PC-9 (cell line): ENCODE measurements at regions of chr3 and their contacts with region 1.

Region 1: GRCh38 chr3:45037734-45038455 is 11.8 kb downstream of the CLEC3B start:
- DNase-seq: peak; percentile 83 to 91
- H3K4me3 ChIP-seq: no peak overlapping the region
- H3K27ac ChIP-seq: no peak overlapping the region
- H3K4me1 ChIP-seq: peaks cover 30% of the 10 kb centered on the region
- H3K27me3 ChIP-seq: no peaks in the 10 kb centered on the region
- CTCF ChIP-seq: peak; percentile 88

Region 2: DNA sequence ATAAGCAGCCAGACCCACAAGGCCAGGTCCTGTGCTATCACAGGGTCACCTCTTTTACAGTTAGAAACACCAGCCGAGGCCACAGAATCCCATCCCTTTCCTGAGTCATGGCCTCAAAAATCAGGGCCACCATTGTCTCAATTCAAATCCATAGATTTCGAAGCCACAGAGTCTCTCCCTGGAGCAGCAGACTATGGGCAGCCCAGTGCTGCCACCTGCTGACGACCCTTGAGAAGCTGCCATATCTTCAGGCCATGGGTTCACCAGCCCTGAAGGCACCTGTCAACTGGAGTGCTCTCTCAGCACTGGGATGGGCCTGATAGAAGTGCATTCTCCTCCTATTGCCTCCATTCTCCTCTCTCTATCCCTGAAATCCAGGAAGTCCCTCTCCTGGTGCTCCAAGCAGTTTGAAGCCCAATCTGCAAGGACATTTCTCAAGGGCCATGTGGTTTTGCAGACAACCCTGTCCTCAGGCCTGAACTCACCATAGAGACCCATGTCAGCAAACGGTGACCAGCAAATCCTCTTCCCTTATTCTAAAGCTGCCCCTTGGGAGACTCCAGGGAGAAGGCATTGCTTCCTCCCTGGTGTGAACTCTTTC is 123.9 kb before region 1 on chr3:
- CTCF ChIA-PET with region 1: no interaction called
- POLR2A ChIA-PET with region 1: no interaction called
- intact Hi-C with region 1: loop called (anchors 5 kb)
- DNase-seq: peak; percentile 46 to 70
- H3K4me3 ChIP-seq: no peak overlapping the region
- H3K27ac ChIP-seq: no peak overlapping the region
- H3K4me1 ChIP-seq: no peaks in the 10 kb centered on the region
- H3K27me3 ChIP-seq: no peaks in the 10 kb centered on the region
- CTCF ChIP-seq: peak; percentile 76

Region 3: DNA sequence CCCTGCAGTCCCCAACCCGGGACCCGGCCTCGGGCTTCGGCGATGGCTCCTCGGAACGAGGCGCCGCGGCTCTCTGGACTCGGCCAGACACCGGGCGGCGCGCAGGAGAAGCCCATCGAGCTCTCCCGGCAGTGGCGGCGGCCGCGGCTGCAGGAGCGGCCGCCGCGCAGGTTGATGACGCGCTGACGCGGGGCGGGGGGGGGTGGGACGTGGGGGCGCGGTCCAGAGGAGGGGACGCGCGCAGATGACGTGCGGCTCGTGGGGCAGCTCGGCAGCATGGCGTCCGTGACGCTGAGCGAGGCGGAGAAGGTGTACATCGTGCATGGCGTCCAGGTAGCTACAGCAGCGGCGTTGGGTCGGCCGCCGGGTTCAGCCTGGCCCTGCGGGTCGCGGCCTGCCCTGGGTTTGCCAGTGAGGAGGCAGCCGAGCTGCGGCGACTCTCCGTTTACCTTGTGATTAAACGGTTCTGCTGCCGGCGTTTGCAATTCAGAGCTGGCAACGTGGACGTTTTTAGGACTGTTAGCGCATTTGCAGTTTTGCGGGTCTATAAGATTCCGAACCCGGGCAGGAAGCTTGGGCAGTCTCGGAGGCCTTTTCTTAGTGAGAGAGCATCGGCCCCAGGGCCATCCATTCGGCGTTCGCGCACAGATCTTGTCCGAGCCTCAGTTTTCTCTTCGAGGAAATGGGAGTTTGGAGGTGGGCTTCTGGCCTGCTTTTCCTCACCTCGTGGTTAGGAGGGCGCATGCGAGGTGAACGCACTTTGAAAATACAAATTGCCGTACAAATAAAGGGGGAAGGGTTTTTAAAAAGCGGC is 61.7 kb before region 1 on chr3 and contains the starts of genes EXOSC7 and ZDHHC3:
- CTCF ChIA-PET with region 1: no interaction called
- POLR2A ChIA-PET with region 1: no interaction called
- intact Hi-C with region 1: no loop called
- DNase-seq: peak; percentile 66 to 69
- H3K4me3 ChIP-seq: peak within 1 kb of the TSS; percentile 85
- H3K27ac ChIP-seq: peak within 1 kb of the TSS; percentile 63
- H3K4me1 ChIP-seq: peaks cover 68% of the 10 kb centered on the region
- H3K27me3 ChIP-seq: no peaks in the 10 kb centered on the region
- CTCF ChIP-seq: no peak
- total RNA-seq, gene EXOSC7: 56.2 and 58.0 TPM in 2 replicates
- total RNA-seq, gene ZDHHC3: 107 and 118 TPM in 2 replicates

Region 4: GRCh38 chr3:45145681-45146614 is 108.1 kb after region 1 on chr3 and contains the start of gene CDCP1:
- CTCF ChIA-PET with region 1: interaction called, 15 read pairs
- POLR2A ChIA-PET with region 1: no interaction called
- intact Hi-C with region 1: no loop called
- DNase-seq: peak; percentile 43 to 78
- H3K4me3 ChIP-seq: peak within 1 kb of the TSS; percentile 83
- H3K27ac ChIP-seq: peak within 1 kb of the TSS; percentile 85
- H3K4me1 ChIP-seq: peaks cover 34% of the 10 kb centered on the region
- H3K27me3 ChIP-seq: no peaks in the 10 kb centered on the region
- CTCF ChIP-seq: no peak
- total RNA-seq, gene CDCP1: 75.7 and 85.0 TPM in 2 replicates

Region 5: DNA sequence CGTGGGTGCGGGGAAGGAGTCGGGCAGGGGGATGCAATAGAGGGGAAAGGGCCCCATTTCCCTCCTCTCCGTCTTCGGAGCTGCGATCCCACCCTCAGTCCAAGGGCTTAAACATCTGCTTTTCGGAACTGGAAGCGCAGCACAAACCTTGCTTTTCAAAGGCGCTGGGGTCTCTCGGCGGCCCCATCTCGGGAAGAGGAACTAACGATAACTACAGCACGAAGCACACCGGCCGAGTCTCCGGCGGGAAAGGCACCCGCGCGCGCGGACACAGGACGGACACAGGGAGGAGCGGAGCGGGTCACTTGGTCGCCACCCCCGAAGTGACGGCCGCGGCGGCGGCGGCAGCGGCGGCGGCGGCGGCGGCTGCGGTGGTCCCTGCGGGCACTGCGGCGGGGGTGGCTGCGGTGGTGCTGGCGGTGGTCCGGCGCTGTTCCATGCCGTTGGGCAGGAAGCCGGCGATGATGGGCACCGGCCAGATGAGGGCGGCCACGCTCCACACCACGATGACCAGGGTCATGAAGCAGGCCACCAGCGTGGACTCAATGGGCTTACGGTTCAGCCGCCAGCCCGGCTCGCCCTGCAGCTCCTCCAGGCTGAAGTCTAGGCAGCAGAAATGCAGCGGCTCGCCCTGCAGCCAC is 187.0 kb after region 1 on chr3:
- CTCF ChIA-PET with region 1: interaction called, 6 read pairs
- POLR2A ChIA-PET with region 1: no interaction called
- intact Hi-C with region 1: loop called (anchors 1 kb)
- DNase-seq: peak in 1 of 2 experiments; percentile 78
- H3K4me3 ChIP-seq: peak overlapping the region; percentile 76
- H3K27ac ChIP-seq: peak overlapping the region; percentile 64; the same call in 1 of the 2 replicates
- H3K4me1 ChIP-seq: peaks cover 30% of the 10 kb centered on the region
- H3K27me3 ChIP-seq: no peaks in the 10 kb centered on the region
- CTCF ChIP-seq: peak; percentile 39

Region 6: DNA sequence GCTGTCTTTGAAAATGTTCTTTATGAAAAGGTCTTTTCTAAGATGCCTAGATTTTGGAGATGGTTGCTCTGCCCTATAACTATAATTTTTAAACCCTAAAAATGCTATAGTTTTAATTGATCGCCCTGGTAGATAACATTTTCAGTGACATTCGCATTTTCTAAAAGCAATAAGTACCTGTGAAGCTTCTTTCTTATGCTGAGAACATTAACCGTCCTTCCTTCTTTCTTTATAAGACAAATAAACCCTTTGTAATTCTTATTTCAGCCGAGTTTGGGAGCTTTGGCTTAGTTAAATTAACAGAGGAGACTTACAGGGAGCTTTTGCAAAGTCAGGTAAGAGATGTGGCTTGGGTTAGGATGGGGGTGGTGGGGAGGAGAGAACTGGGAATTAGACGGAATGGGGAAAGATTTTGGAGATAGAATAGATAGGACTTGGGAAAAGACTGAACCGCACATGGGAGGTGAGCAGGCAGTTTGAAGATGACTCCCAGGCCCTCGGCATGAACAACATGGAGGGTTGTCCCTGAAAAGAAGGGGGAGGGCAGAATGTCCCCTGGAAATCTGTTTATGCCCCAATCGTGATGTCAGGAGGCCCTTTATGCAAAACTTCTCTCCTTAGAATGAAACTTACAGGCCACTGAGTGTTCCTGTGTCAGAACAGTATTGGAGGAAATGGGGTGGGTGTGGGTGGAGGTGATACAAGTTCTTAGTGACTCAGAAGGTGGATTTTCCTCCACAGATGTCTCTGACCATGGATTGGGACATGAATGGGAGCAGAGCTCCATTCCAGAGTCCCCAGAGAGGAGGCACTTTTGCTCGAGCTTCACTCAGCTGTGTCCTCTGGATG is 274.3 kb after region 1 on chr3:
- CTCF ChIA-PET with region 1: no interaction called
- POLR2A ChIA-PET with region 1: no interaction called
- intact Hi-C with region 1: no loop called
- DNase-seq: no peak
- H3K4me3 ChIP-seq: no peak overlapping the region
- H3K27ac ChIP-seq: no peak overlapping the region
- H3K4me1 ChIP-seq: no peaks in the 10 kb centered on the region
- H3K27me3 ChIP-seq: no peaks in the 10 kb centered on the region
- CTCF ChIP-seq: no peak

Region 7: DNA sequence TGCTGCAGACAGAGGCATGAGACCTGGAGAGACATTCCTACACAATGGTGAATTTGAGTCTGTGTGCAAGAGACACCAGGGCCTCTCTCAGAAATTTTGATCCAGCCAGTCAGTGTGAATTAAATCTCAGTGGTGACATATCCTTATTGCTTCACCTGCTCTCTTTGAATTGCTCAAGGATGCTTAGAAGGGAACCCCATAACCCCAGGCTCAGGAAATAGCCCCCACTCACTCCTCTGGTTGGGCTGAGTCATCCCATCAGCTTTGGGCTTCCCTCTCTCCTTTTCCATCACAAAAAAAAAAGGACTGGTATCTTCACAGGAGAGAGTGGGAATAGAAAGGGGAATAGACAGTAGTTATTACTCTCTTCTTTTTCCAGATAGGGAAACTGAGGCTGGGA is 317.5 kb after region 1 on chr3:
- CTCF ChIA-PET with region 1: no interaction called
- POLR2A ChIA-PET with region 1: no interaction called
- intact Hi-C with region 1: no loop called
- DNase-seq: no peak
- H3K4me3 ChIP-seq: no peak overlapping the region
- H3K27ac ChIP-seq: no peak overlapping the region
- H3K4me1 ChIP-seq: no peaks in the 10 kb centered on the region
- H3K27me3 ChIP-seq: no peaks in the 10 kb centered on the region
- CTCF ChIP-seq: no peak

Region 8: DNA sequence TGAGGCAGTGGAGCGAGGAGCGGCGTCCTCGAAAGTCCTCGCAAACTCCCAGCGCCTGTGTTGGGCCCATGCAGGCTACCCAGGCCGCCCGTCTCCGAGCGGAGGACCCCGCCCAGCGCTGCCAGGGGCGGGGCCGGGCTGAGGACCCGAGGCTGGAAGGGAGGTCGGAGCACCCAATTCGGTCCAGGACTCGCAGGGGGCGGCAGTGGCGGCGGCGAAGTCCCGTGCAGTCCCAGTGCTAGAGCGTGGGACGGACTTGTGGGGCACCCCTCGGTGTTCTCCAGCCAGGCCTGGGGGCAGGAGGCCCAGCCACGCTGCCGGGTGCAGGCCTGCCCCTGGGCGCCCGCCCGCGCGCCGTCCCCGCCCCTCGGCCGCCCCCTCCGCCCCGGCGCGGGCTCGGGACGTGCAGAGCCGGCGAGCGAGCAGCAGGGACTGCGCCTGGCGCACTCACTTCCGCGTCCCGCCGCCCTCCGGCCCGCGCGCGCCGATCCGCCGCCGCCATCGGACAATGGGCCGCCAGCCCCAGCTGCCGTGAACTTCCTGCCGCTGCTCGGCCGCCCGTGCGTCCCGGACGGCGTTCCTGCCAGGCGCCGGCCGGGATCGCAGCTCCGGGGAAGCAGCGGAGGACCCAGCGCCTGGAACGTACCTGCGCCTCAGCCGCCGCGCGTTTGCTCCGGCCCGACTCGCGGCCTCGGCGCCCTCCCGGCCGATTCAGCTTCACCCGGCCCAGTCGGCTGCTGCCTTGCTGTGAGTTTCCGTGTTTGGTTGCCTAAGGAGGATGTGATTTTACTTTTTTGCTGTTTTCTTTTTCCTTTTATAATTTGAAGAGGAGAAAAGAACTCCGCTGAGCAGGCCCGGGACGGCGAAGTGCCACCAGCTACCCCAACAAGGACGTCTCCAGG is 556.1 kb after region 1 on chr3:
- CTCF ChIA-PET with region 1: no interaction called
- POLR2A ChIA-PET with region 1: no interaction called
- intact Hi-C with region 1: loop called (anchors 5 kb)
- DNase-seq: peak; percentile 51 to 84
- H3K4me3 ChIP-seq: peak overlapping the region; percentile 64
- H3K27ac ChIP-seq: peak overlapping the region; percentile 41; the same call in 1 of the 2 replicates
- H3K4me1 ChIP-seq: peaks cover 39% of the 10 kb centered on the region
- H3K27me3 ChIP-seq: no peaks in the 10 kb centered on the region
- CTCF ChIP-seq: no peak

Region 9: GRCh38 chr3:45938864-45939263 is 901.0 kb after region 1 on chr3:
- CTCF ChIA-PET with region 1: no interaction called
- POLR2A ChIA-PET with region 1: interaction called, 9 read pairs
- intact Hi-C with region 1: loop called (anchors 10 kb)
- DNase-seq: peak; percentile 73
- H3K4me3 ChIP-seq: no peak overlapping the region
- H3K27ac ChIP-seq: no peak overlapping the region
- H3K4me1 ChIP-seq: peaks cover 8% of the 10 kb centered on the region; the same call in 1 of the 2 replicates
- H3K27me3 ChIP-seq: no peaks in the 10 kb centered on the region
- CTCF ChIP-seq: peak; percentile 86